PC-9 (cell line): ENCODE measurements at regions of chrX and their contacts with region 1.

Region 1: DNA sequence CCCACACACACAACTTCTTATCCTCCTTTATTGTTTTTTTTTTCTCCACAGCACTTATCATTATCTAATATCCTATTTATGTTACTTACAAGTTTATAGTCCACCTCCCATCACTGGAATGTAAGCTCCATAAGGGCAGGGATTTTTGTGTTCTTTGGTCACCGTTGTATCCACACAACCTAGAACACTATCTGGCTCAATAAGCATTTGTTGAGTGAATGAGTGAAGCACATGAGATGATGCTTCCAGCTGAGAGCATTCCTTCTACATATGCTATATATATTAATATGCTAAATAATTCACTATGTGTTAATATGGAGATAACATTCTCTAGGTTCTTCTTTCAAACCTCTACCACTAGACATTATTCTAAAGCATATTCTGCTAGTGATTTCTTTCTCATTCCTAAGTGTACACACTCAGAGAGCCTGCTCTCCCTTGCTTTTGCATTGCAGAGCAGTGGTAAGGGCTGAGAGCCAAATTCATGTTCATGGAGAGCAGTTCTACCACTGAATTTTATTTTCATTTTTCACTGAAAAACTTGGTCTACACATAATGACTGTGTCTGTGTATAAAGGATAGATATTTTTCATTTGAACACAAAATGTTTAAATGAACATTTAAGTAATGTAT is 20.3 kb upstream of the LUZP4 start:
- DNase-seq: no peak
- H3K4me3 ChIP-seq: no peak overlapping the region
- H3K27ac ChIP-seq: no peak overlapping the region
- H3K4me1 ChIP-seq: no peaks in the 10 kb centered on the region
- H3K27me3 ChIP-seq: no peaks in the 10 kb centered on the region
- CTCF ChIP-seq: no peak

Region 2: DNA sequence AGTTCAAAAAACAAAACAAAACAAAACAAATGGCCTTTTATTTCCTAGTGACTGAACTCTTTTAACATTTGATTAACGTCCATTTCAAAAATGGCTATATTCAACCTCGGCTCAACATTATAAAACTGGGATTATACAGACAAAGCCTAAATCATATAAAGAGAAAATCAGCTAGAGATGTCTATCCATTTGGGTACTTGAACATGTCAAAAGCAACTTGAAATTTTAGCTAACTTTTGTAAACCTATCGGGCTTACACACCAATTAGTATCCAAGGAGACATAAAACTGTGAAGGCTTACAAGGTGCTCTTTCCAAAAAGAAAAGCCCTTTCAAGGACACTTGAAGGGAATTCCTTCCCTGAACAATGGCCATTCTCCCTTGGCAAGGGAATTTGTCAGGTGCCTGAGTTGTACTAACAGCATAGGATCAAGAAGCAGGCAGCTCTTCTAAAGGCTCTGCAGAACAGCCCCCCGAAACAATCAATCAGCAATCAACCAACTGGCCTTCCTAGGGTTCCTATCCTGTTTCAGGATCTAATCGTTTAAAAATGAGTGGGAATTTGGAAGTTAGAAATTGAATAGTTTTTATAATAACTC is 1319.0 kb before region 1 on chrX:
- CTCF ChIA-PET with region 1: no interaction called
- POLR2A ChIA-PET with region 1: no interaction called
- intact Hi-C with region 1: no loop called
- DNase-seq: no peak
- H3K4me3 ChIP-seq: no peak overlapping the region
- H3K27ac ChIP-seq: no peak overlapping the region
- H3K4me1 ChIP-seq: no peaks in the 10 kb centered on the region
- H3K27me3 ChIP-seq: no peaks in the 10 kb centered on the region
- CTCF ChIP-seq: no peak

Region 3: DNA sequence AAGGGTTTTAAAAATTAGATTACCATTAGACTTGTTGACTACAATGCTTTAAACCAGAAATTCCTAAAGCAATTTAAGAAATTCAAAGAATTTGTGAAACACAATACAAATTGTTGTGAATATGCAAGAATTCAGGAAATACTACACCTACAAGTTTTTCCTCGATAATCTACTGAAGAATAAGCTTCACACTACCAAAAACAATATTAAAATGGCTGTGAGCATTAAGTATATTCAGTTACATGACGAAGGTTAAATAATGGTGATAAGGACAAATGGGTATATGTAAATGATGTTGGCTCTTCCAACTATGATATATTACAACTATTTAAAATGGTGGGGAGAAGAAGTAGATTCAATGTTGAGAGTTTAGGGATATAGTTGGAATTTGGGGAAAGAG is 796.4 kb before region 1 on chrX:
- CTCF ChIA-PET with region 1: no interaction called
- POLR2A ChIA-PET with region 1: no interaction called
- intact Hi-C with region 1: no loop called
- DNase-seq: no peak
- H3K4me3 ChIP-seq: no peak overlapping the region
- H3K27ac ChIP-seq: no peak overlapping the region
- H3K4me1 ChIP-seq: no peaks in the 10 kb centered on the region
- H3K27me3 ChIP-seq: no peaks in the 10 kb centered on the region
- CTCF ChIP-seq: no peak

Region 4: DNA sequence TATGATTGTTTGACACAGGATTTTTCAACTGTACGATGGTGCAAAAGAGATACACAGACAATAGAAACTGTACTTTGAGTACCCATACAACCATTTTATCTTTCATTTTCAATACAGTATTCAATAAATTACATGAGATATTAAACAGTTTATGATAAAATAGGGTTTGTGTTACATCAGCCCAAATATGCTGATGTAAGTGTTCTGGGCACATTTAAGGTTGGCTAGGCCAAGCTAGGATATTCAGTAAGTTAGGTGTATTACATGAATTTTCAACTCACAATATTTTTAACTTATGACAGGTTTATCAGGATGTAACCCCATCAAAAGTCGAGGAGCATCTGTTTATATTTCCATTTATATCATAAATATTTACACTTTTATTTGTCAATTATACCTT is 248.9 kb after region 1 on chrX:
- CTCF ChIA-PET with region 1: interaction called, 12 read pairs
- POLR2A ChIA-PET with region 1: no interaction called
- intact Hi-C with region 1: no loop called
- DNase-seq: no peak
- H3K4me3 ChIP-seq: no peak overlapping the region
- H3K27ac ChIP-seq: no peak overlapping the region
- H3K4me1 ChIP-seq: no peaks in the 10 kb centered on the region
- H3K27me3 ChIP-seq: no peaks in the 10 kb centered on the region
- CTCF ChIP-seq: no peak

Region 5: DNA sequence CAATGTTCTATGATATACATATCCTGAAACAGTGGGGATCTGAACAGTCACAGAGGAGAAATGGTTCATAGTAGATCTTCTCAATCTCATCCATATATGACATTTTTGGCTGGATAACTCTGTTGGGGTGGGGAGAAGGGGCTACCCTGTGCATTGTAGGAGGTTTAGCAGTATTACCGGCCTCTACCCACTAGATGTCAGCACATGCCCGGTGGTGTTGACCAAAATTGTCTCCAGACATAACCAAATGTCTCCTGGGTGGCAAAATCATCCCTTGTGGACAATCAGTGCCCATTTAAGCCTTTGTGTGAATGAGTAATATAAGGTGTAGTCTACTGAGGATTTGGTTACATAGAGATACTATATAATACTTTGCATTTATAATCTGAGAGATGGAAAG is 381.7 kb after region 1 on chrX:
- CTCF ChIA-PET with region 1: no interaction called
- POLR2A ChIA-PET with region 1: no interaction called
- intact Hi-C with region 1: no loop called
- DNase-seq: peak; percentile 39 to 74
- H3K4me3 ChIP-seq: no peak overlapping the region
- H3K27ac ChIP-seq: peak overlapping the region; percentile 83
- H3K4me1 ChIP-seq: peaks cover 27% of the 10 kb centered on the region
- H3K27me3 ChIP-seq: no peaks in the 10 kb centered on the region
- CTCF ChIP-seq: peak; percentile 86